CD8-positive, alpha-beta memory T cell (primary cell): ENCODE measurements at regions of chr15 and their contacts with region 1.

Region 1: GRCh38 chr15:78264304-78265136 is at the start of gene DNAJA4:
- DNase-seq: peak; percentile 45 to 81 (median 69)
- H3K4me3 ChIP-seq: peak within 1 kb of the TSS; percentile 59
- H3K4me3 Mint-ChIP-seq: peak within 1 kb of the TSS; percentile 85 to 96 (median 89)
- H3K27ac ChIP-seq: peak within 1 kb of the TSS; percentile 46
- H3K27ac Mint-ChIP-seq: peak within 1 kb of the TSS; percentile 55 to 95 (median 90)
- H3K4me1 ChIP-seq: peaks cover 14% of the 10 kb centered on the region
- H3K4me1 Mint-ChIP-seq: peaks cover 16 to 36% (median 32%) of the 10 kb centered on the region in 3 donors
- H3K27me3 ChIP-seq: no peaks in the 10 kb centered on the region
- H3K27me3 Mint-ChIP-seq: no peaks in the 10 kb centered on the region
- total RNA-seq, gene DNAJA4: 32.6 to 35.3 TPM

Region 2: DNA sequence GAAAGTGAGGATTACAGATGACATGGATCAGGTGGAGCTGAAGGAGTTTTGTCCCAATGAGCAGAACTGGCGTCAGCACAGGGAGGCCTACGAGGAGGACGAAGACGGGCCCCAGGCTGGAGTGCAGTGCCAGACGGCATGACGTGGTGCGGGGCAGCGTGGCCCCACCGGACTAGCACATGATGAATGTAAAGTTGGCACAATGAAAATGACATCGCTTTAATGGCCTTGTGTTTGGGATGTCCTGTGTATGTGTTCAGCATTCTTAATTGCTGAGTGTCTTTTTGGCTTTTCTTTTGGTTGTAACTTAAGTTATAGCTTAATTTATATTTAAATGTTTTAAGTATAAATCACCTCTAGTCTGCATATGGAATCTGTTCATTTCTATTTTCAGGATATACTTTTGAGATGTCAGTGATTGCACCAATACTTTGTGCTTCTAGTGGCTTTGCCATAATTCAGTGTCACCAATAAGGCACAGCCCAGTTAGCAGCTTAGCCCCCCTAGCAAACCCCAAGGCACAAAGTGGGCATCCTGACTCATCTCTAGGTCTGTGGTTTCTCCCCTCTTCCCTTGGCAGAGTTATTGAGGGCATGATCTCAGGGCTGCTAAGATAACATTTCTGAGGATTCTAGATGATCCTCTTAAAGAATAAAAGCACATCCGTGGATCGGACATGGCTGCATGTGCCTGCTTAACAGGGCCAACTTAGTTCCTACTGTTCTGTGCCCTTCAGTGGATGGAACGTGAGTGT is 16.0 kb after region 1 on chr15:
- CTCF ChIA-PET with region 1: interaction called, 12 read pairs
- POLR2A ChIA-PET with region 1: no interaction called
- DNase-seq: no peak
- H3K4me3 ChIP-seq: no peak overlapping the region
- H3K4me3 Mint-ChIP-seq: no peak overlapping the region
- H3K27ac ChIP-seq: no peak overlapping the region
- H3K27ac Mint-ChIP-seq: peak overlapping the region in 4 of 8 donors; percentile 12 to 66 (median 26)
- H3K4me1 ChIP-seq: no peaks in the 10 kb centered on the region
- H3K4me1 Mint-ChIP-seq: peaks cover 0 to 2% (median 0%) of the 10 kb centered on the region in 3 donors
- H3K27me3 ChIP-seq: no peaks in the 10 kb centered on the region
- H3K27me3 Mint-ChIP-seq: no peaks in the 10 kb centered on the region

Region 3: GRCh38 chr15:78299101-78299930 is 34.8 kb after region 1 on chr15 and contains the start of gene SKIC8:
- CTCF ChIA-PET with region 1: interaction called, 8 read pairs
- POLR2A ChIA-PET with region 1: interaction called, 25 read pairs
- DNase-seq: peak; percentile 88 to 92 (median 89)
- H3K4me3 ChIP-seq: peak within 1 kb of the TSS; percentile 86
- H3K4me3 Mint-ChIP-seq: peak within 1 kb of the TSS; percentile 95 to 99 (median 97)
- H3K27ac ChIP-seq: peak within 1 kb of the TSS; percentile 87
- H3K27ac Mint-ChIP-seq: peak within 1 kb of the TSS; percentile 89 to 98 (median 95)
- H3K4me1 ChIP-seq: peaks cover 13% of the 10 kb centered on the region
- H3K4me1 Mint-ChIP-seq: peaks cover 25 to 43% (median 31%) of the 10 kb centered on the region in 3 donors
- H3K27me3 ChIP-seq: no peaks in the 10 kb centered on the region
- H3K27me3 Mint-ChIP-seq: peaks cover 0 to 1% of the 10 kb centered on the region in 2 donors
- total RNA-seq, gene SKIC8: 60.2 to 62.9 TPM

Region 4: GRCh38 chr15:78325092-78325843 is 60.7 kb after region 1 on chr15:
- CTCF ChIA-PET with region 1: no interaction called
- POLR2A ChIA-PET with region 1: no interaction called
- DNase-seq: no peak
- H3K4me3 ChIP-seq: no peak overlapping the region
- H3K4me3 Mint-ChIP-seq: no peak overlapping the region
- H3K27ac ChIP-seq: no peak overlapping the region
- H3K27ac Mint-ChIP-seq: peak overlapping the region in 1 of 8 donors; percentile 43
- H3K4me1 ChIP-seq: no peaks in the 10 kb centered on the region
- H3K4me1 Mint-ChIP-seq: no peaks in the 10 kb centered on the region
- H3K27me3 ChIP-seq: no peaks in the 10 kb centered on the region
- H3K27me3 Mint-ChIP-seq: peaks cover 0 to 1% of the 10 kb centered on the region in 2 donors

Region 5: GRCh38 chr15:78340231-78341056 is 75.9 kb after region 1 on chr15 and contains the start of gene CRABP1:
- CTCF ChIA-PET with region 1: no interaction called
- POLR2A ChIA-PET with region 1: no interaction called
- DNase-seq: no peak
- H3K4me3 ChIP-seq: no peak within 1 kb of the TSS
- H3K4me3 Mint-ChIP-seq: no peak within 1 kb of the TSS
- H3K27ac ChIP-seq: no peak within 1 kb of the TSS
- H3K27ac Mint-ChIP-seq: no peak within 1 kb of the TSS
- H3K4me1 ChIP-seq: no peaks in the 10 kb centered on the region
- H3K4me1 Mint-ChIP-seq: peaks cover 0 to 5% (median 4%) of the 10 kb centered on the region in 3 donors
- H3K27me3 ChIP-seq: peaks cover 20% of the 10 kb centered on the region
- H3K27me3 Mint-ChIP-seq: peaks cover 29 to 56% of the 10 kb centered on the region in 2 donors
- total RNA-seq, gene CRABP1: not detected

Region 6: DNA sequence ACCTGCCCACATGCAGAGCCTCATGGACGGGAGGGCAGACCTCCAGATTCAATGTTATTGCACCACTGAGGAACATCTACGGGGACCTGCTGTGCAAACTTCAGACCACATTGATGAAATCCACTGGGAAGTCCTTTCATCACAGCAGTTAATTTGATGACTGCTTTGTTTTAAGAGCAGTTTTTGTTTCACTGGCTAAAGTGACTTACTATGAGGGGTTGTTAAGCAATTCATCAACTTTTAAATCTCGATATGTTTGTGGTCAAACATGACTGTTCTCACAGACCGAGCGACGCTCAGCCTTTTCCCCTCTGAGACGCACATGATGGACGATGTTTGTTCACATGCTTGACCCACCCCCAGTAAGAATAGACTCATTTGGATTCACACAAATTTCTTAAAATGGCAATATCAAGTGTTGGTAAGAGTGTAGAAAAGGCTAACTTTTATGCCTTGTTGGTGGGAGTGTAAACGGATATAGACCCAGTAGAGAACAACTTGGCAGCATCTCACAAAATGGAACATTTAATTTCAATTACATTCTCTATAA is 137.6 kb after region 1 on chr15:
- CTCF ChIA-PET with region 1: no interaction called
- POLR2A ChIA-PET with region 1: no interaction called
- DNase-seq: no peak
- H3K4me3 ChIP-seq: no peak overlapping the region
- H3K4me3 Mint-ChIP-seq: no peak overlapping the region
- H3K27ac ChIP-seq: no peak overlapping the region
- H3K27ac Mint-ChIP-seq: no peak overlapping the region
- H3K4me1 ChIP-seq: no peaks in the 10 kb centered on the region
- H3K4me1 Mint-ChIP-seq: no peaks in the 10 kb centered on the region
- H3K27me3 ChIP-seq: no peaks in the 10 kb centered on the region
- H3K27me3 Mint-ChIP-seq: peaks cover 3 to 13% of the 10 kb centered on the region in 2 donors

Region 7: GRCh38 chr15:78506971-78507830 is 242.7 kb after region 1 on chr15 and contains the start of gene HYKK:
- CTCF ChIA-PET with region 1: no interaction called
- POLR2A ChIA-PET with region 1: no interaction called
- DNase-seq: peak; percentile 38 to 75 (median 62)
- H3K4me3 ChIP-seq: peak within 1 kb of the TSS; percentile 83
- H3K4me3 Mint-ChIP-seq: peak within 1 kb of the TSS; percentile 87 to 94 (median 93)
- H3K27ac ChIP-seq: no peak within 1 kb of the TSS
- H3K27ac Mint-ChIP-seq: peak within 1 kb of the TSS in 7 of 8 donors; percentile 28 to 86 (median 68)
- H3K4me1 ChIP-seq: peaks cover 9% of the 10 kb centered on the region
- H3K4me1 Mint-ChIP-seq: peaks cover 17 to 27% (median 25%) of the 10 kb centered on the region in 3 donors
- H3K27me3 ChIP-seq: no peaks in the 10 kb centered on the region
- H3K27me3 Mint-ChIP-seq: peaks cover 4 to 6% of the 10 kb centered on the region in 2 donors
- total RNA-seq, gene HYKK: 0.82 to 0.94 TPM